Caco-2 (cell line): ENCODE measurements at regions of chr11 and their contacts with region 1.

Region 1: GRCh38 chr11:118997627-118998387 is at the start of gene CENATAC:
- DNase-seq: peak; percentile 98 to 100
- H3K4me3 ChIP-seq: peak within 1 kb of the TSS; percentile 75
- H3K4me3 Mint-ChIP-seq: peak within 1 kb of the TSS; percentile 96
- H3K27ac Mint-ChIP-seq: peak within 1 kb of the TSS; percentile 94
- H3K4me1 ChIP-seq: peaks cover 17% of the 10 kb centered on the region
- H3K4me1 Mint-ChIP-seq: peaks cover 24% of the 10 kb centered on the region
- H3K27me3 ChIP-seq: no peaks in the 10 kb centered on the region
- H3K27me3 Mint-ChIP-seq: no peaks in the 10 kb centered on the region
- CTCF ChIP-seq: peak in 1 of 2 experiments; percentile 11
- total RNA-seq, gene CENATAC: 185 and 194 TPM in 2 replicates

Region 2: DNA sequence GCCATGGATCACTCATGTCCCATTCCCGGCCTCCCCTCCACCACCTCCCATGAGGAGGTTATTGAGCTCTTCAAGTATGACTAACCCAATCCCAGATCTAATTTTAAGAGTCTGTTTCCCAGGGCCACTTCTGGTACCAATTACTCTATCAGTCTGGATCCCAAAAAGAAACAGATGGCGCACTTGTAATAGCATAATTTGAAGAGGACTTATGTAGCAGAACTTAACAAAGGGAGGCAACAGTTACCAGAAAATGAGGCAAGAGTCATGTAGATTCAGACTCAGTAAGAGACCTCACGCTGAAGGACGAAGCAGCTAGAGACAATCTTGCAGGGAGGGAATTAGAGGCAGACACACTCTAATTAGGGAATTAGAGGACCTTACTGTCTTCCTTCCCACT is 253.8 kb before region 1 on chr11:
- CTCF ChIA-PET with region 1: no interaction called
- POLR2A ChIA-PET with region 1: no interaction called
- intact Hi-C with region 1: no loop called
- DNase-seq: no peak
- H3K4me3 ChIP-seq: no peak overlapping the region
- H3K4me3 Mint-ChIP-seq: no peak overlapping the region
- H3K27ac Mint-ChIP-seq: no peak overlapping the region
- H3K4me1 ChIP-seq: peaks cover 23% of the 10 kb centered on the region
- H3K4me1 Mint-ChIP-seq: peaks cover 8% of the 10 kb centered on the region
- H3K27me3 ChIP-seq: no peaks in the 10 kb centered on the region
- H3K27me3 Mint-ChIP-seq: no peaks in the 10 kb centered on the region
- CTCF ChIP-seq: no peak

Region 3: GRCh38 chr11:119057000-119057769 is 59.4 kb after region 1 on chr11 and contains the start of gene HYOU1:
- CTCF ChIA-PET with region 1: interaction called, 3 read pairs
- POLR2A ChIA-PET with region 1: interaction called, 4 read pairs
- intact Hi-C with region 1: loop called (anchors 1 kb)
- DNase-seq: peak; percentile 100
- H3K4me3 ChIP-seq: peak within 1 kb of the TSS; percentile 94
- H3K4me3 Mint-ChIP-seq: peak within 1 kb of the TSS; percentile 88
- H3K27ac Mint-ChIP-seq: peak within 1 kb of the TSS; percentile 98
- H3K4me1 ChIP-seq: peaks cover 10% of the 10 kb centered on the region
- H3K4me1 Mint-ChIP-seq: peaks cover 20% of the 10 kb centered on the region
- H3K27me3 ChIP-seq: no peaks in the 10 kb centered on the region
- H3K27me3 Mint-ChIP-seq: no peaks in the 10 kb centered on the region
- CTCF ChIP-seq: peak; percentile 32 to 77
- total RNA-seq, gene HYOU1: 306 and 366 TPM in 2 replicates